ENCODE measurements at regions of chr12 and their contacts with region 1.

Region 1: DNA sequence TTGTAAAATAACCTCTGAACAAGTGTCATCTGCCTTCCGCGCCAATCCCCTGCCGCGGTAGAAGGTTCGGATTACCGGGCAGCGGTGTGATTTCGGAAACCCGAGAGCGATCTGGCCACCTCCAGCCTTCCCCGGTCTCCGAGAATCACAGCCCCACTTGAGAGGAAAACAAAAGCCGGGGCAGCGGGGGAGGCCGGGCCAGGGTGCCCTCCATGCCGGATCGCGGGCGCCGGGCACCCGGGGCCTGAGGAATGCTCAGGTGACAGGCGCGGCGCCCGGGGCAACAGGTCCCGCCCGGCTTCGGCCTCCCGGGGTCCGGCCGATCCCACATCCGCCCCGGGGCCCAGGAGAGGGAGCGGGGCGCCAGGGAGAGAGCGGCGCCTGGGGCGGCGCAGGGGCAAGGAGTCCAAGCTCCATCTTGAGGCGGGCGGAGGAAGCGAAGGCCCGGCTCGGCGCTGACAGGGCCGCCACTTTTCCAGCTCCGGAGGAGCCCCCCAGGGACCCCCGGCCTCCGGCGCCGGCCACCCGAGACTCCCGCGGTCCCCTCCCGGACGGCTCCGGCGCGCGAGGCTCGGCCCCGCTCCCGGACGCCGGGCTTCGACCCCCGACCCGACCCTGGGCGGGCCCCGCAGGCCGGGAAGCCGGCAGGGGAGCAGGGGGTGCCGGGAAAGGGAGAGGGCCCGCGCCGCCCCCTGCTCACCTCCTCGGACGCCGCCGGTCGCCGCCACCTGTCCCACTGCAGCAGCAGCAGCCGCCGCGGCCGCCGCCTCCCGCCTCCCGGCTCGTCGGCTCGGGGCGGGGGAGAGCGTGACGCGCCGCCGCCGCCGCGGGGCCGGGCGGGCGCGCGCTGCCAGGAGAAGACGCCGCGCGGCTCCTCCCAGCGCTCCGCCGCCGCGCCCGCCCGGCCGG is at the start of gene CLIP1:
- DNase-seq: no peak
- H3K27ac ChIP-seq: peak within 1 kb of the TSS; percentile 97
- CTCF ChIP-seq: peak; percentile 52

Region 2: DNA sequence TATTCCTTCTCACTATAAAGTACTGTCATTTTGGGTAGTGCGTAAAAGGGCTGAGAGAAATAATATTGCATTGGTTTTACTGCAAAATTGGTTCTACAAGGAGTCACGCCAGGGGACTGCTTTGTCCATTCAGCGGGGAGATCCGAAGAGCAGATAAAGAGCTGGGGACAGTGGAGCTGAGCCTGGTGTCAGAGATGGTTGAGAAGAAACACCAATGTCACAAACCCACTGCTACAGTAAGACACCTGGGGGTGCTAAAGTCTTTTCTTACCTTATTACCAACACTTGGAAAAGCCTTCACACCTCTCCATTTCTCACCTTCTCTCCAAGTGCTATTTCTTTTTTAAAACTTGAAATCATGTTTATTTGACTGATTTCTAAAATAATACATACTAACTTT is 262.2 kb before region 1 on chr12:
- CTCF ChIA-PET with region 1: no interaction called
- POLR2A ChIA-PET with region 1: no interaction called
- DNase-seq: no peak
- H3K27ac ChIP-seq: no peak overlapping the region
- CTCF ChIP-seq: no peak

Region 3: DNA sequence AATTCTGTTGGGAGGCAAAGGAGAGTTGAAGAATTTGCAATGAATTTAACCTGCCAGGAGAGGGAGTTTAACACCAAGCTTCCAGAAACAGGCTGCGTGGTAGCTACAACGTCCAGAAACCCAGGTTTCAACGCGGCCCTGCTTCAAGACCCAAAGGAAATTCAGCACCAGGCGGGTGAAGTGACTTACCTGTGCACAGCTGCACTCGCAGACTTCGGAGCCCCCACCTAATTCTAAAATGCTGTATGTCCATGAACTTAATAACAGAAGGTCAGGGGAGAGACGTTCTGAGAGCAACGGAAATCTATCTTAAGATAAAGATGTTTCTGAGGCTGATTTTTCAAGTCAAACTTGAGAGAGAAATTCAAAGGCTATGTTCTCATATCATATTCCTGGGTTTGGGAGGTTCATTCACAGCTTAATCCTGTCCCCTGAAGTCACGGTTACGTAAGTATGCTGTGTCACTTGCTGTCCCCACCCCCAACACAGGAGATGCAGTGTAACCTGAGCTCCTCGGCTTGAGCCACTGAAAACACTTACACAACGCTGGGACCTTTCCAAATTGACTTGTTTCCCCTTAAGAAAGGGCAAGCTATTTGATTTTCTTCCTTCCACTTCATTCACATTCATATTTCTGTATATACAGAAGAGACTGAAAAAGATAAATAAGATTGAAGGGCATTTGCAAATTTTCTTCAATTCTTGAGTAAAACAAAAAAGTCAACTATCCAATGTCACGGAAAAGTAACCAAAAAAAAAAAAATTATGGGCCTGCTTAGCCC is 22.3 kb before region 1 on chr12:
- CTCF ChIA-PET with region 1: interaction called, 16 read pairs
- POLR2A ChIA-PET with region 1: interaction called, 6 read pairs
- DNase-seq: peak; percentile 68
- H3K27ac ChIP-seq: peak overlapping the region; percentile 98
- CTCF ChIP-seq: peak; percentile 73

Region 4: GRCh38 chr12:122471324-122472226 is 49.5 kb after region 1 on chr12:
- CTCF ChIA-PET with region 1: interaction called, 10 read pairs
- POLR2A ChIA-PET with region 1: no interaction called
- DNase-seq: peak; percentile 46
- H3K27ac ChIP-seq: peak overlapping the region; percentile 34
- CTCF ChIP-seq: peak; percentile 84

Region 5: DNA sequence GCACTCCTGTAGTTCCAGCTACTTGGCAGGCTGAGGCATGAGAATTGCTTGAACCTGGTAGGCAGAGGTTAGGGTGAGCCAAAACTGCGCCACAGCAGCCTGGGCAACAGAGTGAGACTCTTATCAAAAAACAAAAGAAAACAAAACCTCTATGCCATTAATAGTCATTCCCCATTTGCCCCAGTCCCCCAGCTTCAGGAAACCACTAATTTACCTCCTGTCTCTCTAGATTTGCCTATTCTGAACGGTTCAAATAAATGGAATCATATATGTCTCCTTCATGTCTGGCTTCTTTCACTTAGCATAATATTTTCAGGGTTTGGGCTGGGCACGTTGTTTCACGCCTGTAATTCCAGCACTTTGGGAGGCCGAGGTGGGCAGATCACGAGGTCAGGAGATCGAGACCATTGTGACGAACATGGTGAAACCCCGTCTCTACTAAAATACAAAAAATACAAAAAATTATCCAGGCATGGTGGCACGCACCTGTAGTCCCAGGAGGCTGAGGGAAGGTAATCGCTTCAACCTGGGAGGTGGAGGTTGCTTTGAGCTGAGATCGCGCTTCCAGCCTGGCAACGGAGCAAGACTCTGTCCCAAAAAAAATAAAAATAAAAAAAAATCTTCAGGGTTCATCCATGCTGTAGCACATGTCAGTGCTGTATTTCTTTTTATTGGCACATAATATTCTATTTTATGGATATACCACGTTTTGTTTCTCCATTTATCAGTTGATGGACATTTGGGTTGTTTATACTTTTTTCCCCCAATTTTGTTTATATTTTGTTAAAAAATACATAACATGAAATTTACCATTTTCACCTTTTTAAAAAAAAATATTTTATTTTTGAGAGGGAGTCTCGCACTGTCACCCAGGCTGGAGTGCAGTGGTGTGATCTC is 136.9 kb after region 1 on chr12:
- CTCF ChIA-PET with region 1: no interaction called
- POLR2A ChIA-PET with region 1: no interaction called
- DNase-seq: no peak
- H3K27ac ChIP-seq: no peak overlapping the region
- CTCF ChIP-seq: no peak